Natural killer cell (primary cell): ENCODE measurements at regions of chr3 and their contacts with region 1.

Region 1: GRCh38 chr3:116630494-116630893 is 79.1 kb upstream of the TUSC7 start:
- DNase-seq: no peak
- ATAC-seq: no peak
- H3K4me3 ChIP-seq: no peak overlapping the region
- H3K4me3 Mint-ChIP-seq: no peak overlapping the region
- H3K27ac ChIP-seq: no peak overlapping the region
- H3K27ac Mint-ChIP-seq: no peak overlapping the region
- H3K4me1 ChIP-seq: no peaks in the 10 kb centered on the region
- H3K4me1 Mint-ChIP-seq: no peaks in the 10 kb centered on the region
- H3K27me3 ChIP-seq: no peaks in the 10 kb centered on the region
- H3K27me3 Mint-ChIP-seq: no peaks in the 10 kb centered on the region
- CTCF ChIP-seq: no peak

Region 2: GRCh38 chr3:116561529-116561928 is 69.0 kb before region 1 on chr3:
- intact Hi-C with region 1: loop called (anchors 2 kb)
- DNase-seq: no peak
- ATAC-seq: no peak
- H3K4me3 ChIP-seq: no peak overlapping the region
- H3K4me3 Mint-ChIP-seq: no peak overlapping the region
- H3K27ac ChIP-seq: no peak overlapping the region
- H3K27ac Mint-ChIP-seq: no peak overlapping the region
- H3K4me1 ChIP-seq: no peaks in the 10 kb centered on the region
- H3K4me1 Mint-ChIP-seq: no peaks in the 10 kb centered on the region
- H3K27me3 ChIP-seq: no peaks in the 10 kb centered on the region
- H3K27me3 Mint-ChIP-seq: no peaks in the 10 kb centered on the region
- CTCF ChIP-seq: no peak